ENCODE measurements at regions of chr9 and their contacts with region 1.

Region 1: DNA sequence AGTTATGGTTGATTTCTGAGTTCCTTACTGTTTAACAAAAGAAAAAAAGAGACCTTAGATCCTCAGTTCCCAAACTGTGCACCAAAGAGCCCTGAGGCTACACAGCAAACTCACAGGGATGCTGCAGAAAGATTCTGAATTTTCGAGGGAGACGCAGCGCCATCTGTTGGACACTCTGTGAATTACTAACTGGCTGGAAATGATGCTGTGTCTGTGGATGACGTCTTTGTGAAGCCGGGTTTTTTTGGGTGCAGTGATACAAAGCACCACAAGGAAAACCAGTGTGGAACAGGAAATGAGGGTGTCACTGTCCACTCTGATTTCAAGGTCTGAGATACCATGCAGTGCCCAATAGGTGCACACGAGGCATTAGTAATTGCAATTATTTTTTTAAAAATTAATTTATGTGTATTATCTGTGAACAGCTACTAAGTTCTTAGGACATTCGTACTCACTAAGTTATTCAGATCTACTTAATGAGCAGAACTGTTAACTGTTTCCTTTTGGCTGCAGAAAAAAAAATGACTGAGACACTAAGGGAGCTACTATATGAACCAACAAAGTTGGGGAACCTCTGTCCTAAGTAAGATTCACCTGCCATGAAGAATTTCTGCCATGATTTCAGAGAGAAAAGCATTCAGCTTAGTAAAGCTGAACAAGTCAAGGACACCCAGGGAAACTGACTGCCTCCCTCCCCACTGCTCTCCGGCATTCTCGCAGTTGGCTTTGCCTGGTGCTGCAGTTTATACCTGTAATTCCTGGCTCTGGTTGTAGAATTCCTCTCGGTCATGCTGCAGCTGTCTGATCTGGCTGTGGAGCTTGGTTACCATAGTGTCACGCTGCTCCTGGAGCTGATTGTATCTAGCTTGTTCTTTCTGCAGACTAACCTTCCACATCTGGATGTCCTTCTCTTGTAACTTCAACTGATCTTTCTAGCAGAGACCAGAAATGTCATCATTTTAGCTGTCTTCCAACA is 23.4 kb downstream of the SPACA9 start:
- DNase-seq: peak; percentile 43
- ATAC-seq: peak; percentile 100
- H3K4me3 ChIP-seq: no peak overlapping the region
- H3K27ac ChIP-seq: no peak overlapping the region
- H3K4me1 ChIP-seq: no peaks in the 10 kb centered on the region
- H3K27me3 ChIP-seq: no peaks in the 10 kb centered on the region
- CTCF ChIP-seq: peak; percentile 80 to 93 (median 88); a peak in 5 of 6 replicates
- EP300 ChIP-seq: no peak
- POLR2A ChIP-seq: no peak
- RAD21 ChIP-seq: peak; percentile 74

Region 2: DNA sequence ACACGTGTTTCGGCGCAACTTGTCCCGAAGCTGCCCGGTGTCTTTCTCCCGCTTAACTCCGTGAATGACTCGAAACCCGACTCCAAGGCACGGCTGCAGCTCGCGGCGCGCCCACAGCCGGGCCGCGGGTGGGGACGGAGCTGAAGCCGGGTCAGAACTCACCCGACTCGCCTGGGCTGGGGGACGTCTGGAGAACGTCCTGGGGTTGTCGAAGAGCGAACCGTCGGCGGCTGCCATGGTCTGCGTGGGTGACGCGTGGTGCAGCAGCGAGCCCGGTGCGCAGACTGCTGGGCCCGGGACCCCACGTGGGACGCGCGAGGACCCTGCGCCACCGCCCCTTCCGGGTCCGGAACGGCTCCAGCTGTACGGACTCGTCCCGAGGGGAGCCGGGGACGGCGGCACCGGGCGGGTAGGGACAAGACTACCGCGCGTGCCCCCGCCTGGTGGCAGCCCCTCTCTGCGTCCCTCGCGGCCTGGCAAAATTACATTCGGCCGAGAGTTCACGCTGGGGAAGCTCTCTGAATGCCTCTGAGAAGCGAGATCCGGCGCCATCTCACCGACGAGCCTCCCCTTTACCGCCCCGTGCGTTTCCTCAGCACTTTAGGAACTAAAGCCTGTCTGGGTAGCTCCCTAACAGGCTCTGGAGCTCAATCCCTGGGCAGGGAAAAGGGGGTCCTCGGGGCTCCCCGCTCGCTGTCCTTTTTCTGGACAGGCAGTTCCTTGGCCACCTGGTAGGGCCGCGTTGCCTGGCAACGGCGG is 232.3 kb before region 1 on chr9 and contains the start of gene DDX31:
- CTCF ChIA-PET with region 1: no interaction called
- POLR2A ChIA-PET with region 1: no interaction called
- RAD21 ChIA-PET with region 1: interaction called, 3 read pairs
- SMC1A ChIA-PET with region 1: no interaction called
- in situ Hi-C with region 1: no loop called
- intact Hi-C with region 1: loop called (anchors 10 kb)
- DNase-seq: peak; percentile 37
- ATAC-seq: peak; percentile 93
- H3K4me3 ChIP-seq: peak within 1 kb of the TSS; percentile 93
- H3K27ac ChIP-seq: peak within 1 kb of the TSS; percentile 98
- H3K4me1 ChIP-seq: no peaks in the 10 kb centered on the region; the same call in 1 of the 2 replicates
- H3K27me3 ChIP-seq: no peaks in the 10 kb centered on the region
- CTCF ChIP-seq: no peak
- EP300 ChIP-seq: no peak
- POLR2A ChIP-seq: peak; percentile 96
- RAD21 ChIP-seq: no peak
- polyA plus RNA-seq, gene DDX31: 12.1 to 14.6 TPM

Region 3: DNA sequence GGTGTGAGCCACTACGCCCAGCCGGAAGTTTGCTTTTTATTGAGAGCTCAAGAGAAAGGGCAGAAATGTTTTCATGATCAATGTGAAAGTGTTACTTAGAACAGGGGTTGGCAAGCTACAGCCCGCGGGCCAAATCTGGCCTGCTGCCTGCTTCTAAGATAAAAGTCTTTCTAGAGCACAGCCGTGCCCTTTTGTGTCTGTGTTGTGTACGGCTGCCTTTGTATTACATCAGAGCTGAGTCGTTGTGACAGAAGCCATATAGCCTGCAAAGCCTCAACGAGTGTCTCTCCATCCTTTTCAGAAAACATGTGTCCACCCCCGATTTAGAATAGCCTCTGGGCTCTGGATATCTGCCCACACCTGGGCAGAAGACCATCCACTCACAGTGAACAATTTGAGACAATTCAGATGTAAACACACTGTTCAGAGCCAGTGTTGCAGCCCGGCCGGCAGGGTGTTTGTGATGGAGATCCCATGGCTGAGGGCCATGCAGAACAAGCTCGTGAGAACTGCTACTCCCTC is 52.9 kb before region 1 on chr9:
- CTCF ChIA-PET with region 1: interaction called, 29 read pairs
- POLR2A ChIA-PET with region 1: interaction called, 3 read pairs
- RAD21 ChIA-PET with region 1: interaction called, 7 read pairs
- SMC1A ChIA-PET with region 1: interaction called, 9 read pairs
- in situ Hi-C with region 1: no loop called
- intact Hi-C with region 1: loop called (anchors 1 kb)
- DNase-seq: no peak
- ATAC-seq: no peak
- H3K4me3 ChIP-seq: no peak overlapping the region
- H3K27ac ChIP-seq: no peak overlapping the region
- H3K4me1 ChIP-seq: no peaks in the 10 kb centered on the region
- H3K27me3 ChIP-seq: no peaks in the 10 kb centered on the region; a peak in 1 of 4 replicates
- CTCF ChIP-seq: no peak
- EP300 ChIP-seq: no peak
- POLR2A ChIP-seq: no peak
- RAD21 ChIP-seq: no peak

Region 4: DNA sequence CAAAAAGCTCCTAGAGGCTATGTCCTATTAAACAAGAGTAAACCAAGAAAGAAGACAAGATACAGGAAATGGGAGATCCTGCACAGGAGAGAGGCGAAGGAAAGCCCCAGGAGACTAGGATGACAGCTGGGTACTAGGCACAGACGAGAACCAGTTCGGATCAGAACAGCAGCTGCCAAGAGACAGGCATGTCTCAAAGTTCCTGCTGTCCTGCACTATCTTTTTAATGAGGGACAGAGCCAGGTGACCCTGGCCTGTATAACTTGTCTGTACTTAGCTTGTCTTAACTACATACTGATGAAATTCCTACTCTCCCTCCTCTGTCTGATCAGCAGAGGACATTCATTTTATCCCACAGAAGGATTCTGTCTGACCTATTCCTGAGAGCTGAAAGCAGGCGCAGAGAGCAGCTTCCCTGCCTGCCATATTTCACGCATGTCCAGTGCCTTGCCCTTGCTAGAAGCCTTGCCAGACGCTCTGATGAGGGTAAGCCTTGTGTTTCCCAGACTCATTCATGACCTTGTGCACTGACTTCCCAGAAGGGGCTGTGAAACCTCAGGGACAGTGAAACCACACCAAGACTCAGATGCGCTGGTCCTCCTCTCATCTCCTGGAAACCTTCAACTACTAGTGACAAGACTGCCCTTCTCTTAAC is 17.6 kb after region 1 on chr9:
- CTCF ChIA-PET with region 1: interaction called, 18 read pairs
- POLR2A ChIA-PET with region 1: no interaction called
- RAD21 ChIA-PET with region 1: no interaction called
- SMC1A ChIA-PET with region 1: interaction called, 5 read pairs
- in situ Hi-C with region 1: no loop called
- intact Hi-C with region 1: no loop called
- DNase-seq: no peak
- ATAC-seq: no peak
- H3K4me3 ChIP-seq: no peak overlapping the region
- H3K27ac ChIP-seq: no peak overlapping the region
- H3K4me1 ChIP-seq: no peaks in the 10 kb centered on the region
- H3K27me3 ChIP-seq: no peaks in the 10 kb centered on the region
- CTCF ChIP-seq: no peak
- EP300 ChIP-seq: no peak
- POLR2A ChIP-seq: no peak
- RAD21 ChIP-seq: no peak